Heart left ventricle (tissue), 16 donors: ENCODE measurements at regions of chr14 and their contacts with region 1.

Region 1: GRCh38 chr14:105682940-105683570 is 156.7 kb downstream of the TMEM121 start:
- DNase-seq: no peak
- ATAC-seq: no peak
- H3K4me3 ChIP-seq: no peak overlapping the region
- H3K27ac ChIP-seq: no peak overlapping the region
- H3K4me1 ChIP-seq: no peaks in the 10 kb centered on the region
- H3K27me3 ChIP-seq: peaks cover 0 to 4% (median 0%) of the 10 kb centered on the region in 9 donors
- CTCF ChIP-seq: no peak
- POLR2A ChIP-seq: no peak

Region 2: GRCh38 chr14:104573930-104574329 is 1109.1 kb before region 1 on chr14:
- intact Hi-C with region 1: no loop called
- DNase-seq: peak in 2 of 5 donors; percentile 43 to 78
- ATAC-seq: peak; percentile 42 to 63 (median 54)
- H3K4me3 ChIP-seq: no peak overlapping the region
- H3K27ac ChIP-seq: peak overlapping the region in 3 of 12 donors; percentile 4 to 34 (median 24)
- H3K4me1 ChIP-seq: peaks cover 0 to 51% (median 9%) of the 10 kb centered on the region in 12 donors
- H3K27me3 ChIP-seq: peaks cover 0 to 39% (median 0%) of the 10 kb centered on the region in 9 donors
- CTCF ChIP-seq: no peak
- POLR2A ChIP-seq: no peak

Region 3: DNA sequence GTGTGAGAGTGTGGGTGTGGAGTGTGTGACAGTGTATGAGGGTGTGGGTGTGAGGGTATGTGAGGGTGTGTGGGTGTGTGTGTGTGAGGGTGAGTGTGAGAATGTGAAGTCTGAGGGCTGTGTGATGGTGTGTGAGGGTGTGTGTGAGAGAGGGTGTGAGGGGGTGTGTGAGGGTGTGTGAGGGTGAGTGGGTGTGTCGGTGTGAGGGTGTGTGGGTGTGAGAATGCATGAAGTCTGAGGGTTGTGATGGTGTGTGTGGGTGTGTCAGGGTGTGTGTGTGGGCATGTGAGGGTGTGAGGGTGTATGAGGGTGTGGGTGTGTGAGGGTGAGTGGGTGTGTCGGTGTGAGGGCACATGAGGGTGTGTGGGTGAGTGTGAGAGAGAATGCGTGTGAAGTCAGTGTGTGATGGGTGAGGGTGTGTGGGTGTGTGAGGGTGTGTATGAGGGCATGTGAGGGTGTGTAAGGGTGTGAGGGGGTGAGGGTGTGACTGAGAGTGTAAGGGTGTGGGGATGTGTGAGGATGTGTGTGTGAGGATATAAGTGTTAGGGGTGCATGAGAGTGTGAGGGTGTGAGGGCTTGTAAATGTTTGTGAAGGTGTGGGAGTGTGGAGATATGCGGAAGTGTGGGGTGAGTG is 120.2 kb before region 1 on chr14:
- intact Hi-C with region 1: loop called in 7 of 10 experiments (anchors 5 to 10 kb)
- DNase-seq: no peak
- ATAC-seq: no peak
- H3K4me3 ChIP-seq: no peak overlapping the region
- H3K27ac ChIP-seq: no peak overlapping the region
- H3K4me1 ChIP-seq: no peaks in the 10 kb centered on the region
- H3K27me3 ChIP-seq: no peaks in the 10 kb centered on the region
- CTCF ChIP-seq: no peak
- POLR2A ChIP-seq: no peak

Region 4: DNA sequence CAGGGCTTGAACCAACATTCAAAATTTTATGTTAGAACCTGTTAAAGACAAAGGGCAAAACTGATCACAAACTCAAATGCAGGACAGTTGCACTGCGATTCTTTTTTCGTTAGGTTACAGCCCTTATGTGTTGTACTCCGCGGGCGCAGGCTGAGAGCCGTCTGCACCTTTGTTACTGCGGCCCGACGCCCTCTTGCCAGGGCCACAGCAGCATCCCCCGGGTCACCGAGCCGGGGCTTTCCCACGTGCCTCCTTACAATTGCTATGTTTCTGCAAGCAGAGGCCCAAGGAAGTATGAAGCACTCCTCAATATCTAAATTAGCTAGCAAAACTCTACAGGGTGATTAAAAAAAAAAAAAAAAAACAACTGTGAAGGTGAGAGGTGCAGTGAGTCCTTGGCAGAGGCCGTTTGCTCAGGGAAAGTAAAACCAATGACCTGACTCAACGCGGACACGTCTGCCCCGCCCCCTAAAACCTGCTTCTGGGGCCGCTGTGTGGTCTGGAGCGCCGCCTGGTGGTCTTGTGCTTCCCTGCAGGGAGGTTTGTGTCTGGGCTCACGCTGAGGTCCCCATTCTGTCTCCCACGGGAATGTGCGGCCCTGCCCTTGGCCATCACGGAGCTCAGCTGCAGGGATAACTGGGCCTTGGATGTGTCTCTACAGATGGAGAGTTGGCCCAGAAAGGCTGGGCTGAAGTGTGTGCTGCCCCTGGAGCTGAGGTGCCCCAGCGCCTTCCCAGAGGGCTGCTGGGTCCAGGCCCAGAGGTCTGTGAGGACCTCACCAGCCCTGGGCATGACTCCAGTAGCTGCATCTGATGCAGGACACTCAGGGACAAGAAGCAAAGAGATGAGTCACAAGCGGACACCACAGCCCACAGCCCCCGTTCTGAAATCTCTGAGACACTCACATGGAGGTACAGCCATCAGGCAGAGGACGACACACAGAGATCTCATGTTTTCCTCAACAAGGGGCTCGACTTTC is 261.9 kb after region 1 on chr14:
- intact Hi-C with region 1: loop called in 4 of 10 experiments (anchors 5 to 10 kb)
- DNase-seq: peak in 4 of 5 donors; percentile 38 to 81 (median 50)
- ATAC-seq: peak in 3 of 4 donors; percentile 68 to 80 (median 76)
- H3K4me3 ChIP-seq: no peak overlapping the region
- H3K27ac ChIP-seq: no peak overlapping the region
- H3K4me1 ChIP-seq: no peaks in the 10 kb centered on the region
- H3K27me3 ChIP-seq: peaks cover 0 to 5% (median 0%) of the 10 kb centered on the region in 9 donors
- CTCF ChIP-seq: peak; percentile 53 to 77 (median 68)
- POLR2A ChIP-seq: no peak